Posterior vena cava (tissue), 2 donors: ENCODE measurements at regions of chr22 and their contacts with region 1.

Region 1: GRCh38 chr22:49979587-49980264 is 19.2 kb downstream of the PIM3 start:
- DNase-seq: peak; percentile 68

Region 2: DNA sequence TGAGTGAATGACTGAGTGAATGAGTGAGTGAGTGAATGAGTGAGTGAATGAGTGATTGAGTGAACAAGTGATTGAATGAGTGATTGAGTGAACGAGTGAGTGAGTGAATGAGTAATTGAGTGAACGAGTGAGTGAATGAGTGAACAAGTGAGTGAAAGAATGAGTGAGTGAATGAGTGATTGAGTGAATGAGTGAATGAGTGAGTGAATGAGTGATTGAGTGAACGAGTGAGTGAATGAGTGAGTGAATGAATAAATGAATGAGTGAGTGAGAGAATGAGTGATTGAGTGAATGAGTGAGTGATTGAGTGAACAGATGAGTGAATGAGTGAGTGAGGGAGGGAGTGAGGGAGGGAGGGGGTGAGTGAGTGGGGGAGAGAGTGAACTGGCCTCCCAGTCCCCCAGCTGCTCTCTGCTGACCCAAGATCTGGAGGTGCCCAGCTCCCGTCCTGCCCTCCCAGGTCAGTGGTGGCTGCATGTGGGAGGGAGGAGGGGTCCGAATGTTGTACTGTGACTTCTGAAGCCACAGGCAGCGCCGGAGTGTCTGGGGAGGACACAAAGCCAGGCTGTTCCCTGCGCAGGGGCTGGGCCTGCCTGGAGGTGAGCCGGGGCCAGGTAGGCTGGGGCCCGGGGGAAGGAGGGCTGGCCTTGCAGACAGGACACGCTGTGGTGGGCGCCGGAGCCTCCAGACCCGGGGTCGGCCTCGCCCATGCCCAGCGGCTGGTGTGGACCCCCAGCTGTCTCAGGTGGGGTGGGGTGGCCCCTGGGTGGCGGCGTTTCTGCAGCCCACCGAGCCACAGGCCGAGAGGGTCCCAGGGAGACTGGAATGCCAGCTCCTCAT is 36.9 kb before region 1 on chr22:
- intact Hi-C with region 1: loop called in 1 of 2 experiments (anchors 5 kb)
- DNase-seq: no peak

Region 3: DNA sequence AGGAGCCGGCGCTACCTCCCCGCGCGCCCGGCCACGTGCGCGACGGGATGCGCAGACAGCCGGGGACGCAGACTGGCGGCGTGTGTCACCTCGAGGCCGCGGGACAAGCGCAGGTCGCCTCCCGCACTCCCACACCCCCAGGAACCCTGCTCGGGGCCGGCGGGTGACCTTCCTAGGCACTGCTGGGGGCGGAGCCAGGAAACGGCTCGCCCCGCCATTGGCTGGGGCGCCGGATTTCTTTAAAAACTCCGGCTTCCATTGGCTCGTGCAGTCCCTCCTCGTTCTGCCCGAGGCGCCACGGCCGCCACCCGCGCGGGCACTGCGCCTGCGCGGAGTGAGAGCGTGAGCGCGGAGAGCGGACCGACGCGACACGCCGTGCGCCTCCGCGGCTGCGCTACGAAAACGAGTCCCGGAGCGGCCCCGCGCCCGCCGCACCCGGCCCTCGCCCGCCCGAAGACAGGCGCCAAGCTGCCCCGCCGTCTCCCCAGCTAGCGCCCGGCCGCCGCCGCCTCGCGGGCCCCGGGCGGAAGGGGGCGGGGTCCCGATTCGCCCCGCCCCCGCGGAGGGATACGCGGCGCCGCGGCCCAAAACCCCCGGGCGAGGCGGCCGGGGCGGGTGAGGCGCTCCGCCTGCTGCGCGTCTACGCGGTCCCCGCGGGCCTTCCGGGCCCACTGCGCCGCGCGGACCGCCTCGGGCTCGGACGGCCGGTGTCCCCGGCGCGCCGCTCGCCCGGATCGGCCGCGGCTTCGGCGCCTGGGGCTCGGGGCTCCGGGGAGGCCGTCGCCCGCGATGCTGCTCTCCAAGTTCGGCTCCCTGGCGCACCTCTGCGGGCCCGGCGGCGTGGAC is 19.3 kb before region 1 on chr22 and contains the start of gene PIM3:
- intact Hi-C with region 1: no loop called
- DNase-seq: peak; percentile 97
- total RNA-seq, gene PIM3: 29.9 to 37.2 TPM